GM13976 (cell line): ENCODE measurements at regions of chr1 and their contacts with region 1.

Region 1: DNA sequence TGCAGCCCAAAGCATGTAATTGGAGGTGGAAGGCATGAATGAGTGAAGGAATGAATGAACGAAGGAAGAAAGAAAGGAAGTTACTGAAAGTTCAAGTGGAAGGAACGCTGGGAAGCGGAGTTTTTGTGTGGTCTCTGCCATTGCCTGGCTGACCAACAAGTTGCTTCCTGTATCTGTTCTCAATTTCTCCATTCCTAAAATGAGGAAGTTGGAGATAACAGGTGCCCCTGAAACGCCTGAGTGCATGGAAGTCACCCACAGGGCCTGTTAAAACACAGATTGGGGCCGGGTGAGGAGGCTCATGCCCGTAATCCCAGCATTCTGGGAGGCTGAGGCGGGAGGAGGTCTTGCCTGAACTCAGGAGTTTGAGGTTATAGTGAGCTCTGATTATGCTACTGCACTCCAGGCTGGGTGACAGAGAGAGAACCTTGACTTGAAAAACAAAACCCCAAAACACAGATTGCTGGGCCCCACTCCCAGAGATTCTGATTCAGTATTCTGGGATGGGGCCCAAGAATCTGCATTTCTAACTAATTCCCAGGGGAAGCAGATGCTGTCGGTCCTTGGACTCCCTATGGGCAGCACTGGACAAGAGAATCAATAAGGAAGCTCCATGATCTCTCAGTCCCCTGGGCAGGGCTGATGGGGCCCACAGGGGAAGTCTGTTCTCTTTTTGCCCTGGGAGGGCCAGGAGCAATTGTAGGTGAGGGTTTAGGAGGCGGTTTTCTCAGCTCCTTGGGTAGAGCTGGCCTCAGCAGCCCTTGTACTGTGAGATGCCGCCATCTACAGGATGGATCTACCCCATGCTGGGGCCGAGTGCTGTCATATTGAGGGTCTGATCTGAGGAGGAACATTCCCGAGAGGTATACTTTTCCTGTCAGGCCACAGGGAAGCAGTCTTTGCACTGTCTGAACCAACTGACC is 3.3 kb upstream of the CNR2 start:
- DNase-seq: peak; percentile 85
- CTCF ChIP-seq: peak; percentile 74

Region 2: DNA sequence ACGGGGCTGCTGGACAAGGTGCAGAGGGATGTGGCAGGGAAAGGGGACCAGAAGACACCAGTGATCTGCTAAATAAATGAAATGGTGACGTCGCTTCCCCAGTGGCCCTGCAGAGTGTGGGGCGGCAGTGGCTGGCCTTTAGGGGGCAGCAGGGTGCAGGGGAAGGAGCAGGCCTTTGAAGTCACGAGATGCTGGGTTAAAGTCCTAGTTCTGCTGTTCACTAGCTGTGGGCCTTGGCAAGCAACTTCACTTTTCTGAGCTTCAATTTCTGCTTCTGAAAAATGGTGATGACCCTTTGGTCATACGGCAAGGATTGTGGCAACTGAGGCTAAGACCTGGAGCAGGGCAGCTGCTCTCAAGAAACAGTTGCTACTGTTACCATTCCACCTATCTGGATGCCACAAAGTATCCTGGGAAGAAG is 106.7 kb before region 1 on chr1:
- in situ Hi-C with region 1: loop called (anchors 5 kb)
- DNase-seq: peak; percentile 87
- CTCF ChIP-seq: peak; percentile 94

Region 3: DNA sequence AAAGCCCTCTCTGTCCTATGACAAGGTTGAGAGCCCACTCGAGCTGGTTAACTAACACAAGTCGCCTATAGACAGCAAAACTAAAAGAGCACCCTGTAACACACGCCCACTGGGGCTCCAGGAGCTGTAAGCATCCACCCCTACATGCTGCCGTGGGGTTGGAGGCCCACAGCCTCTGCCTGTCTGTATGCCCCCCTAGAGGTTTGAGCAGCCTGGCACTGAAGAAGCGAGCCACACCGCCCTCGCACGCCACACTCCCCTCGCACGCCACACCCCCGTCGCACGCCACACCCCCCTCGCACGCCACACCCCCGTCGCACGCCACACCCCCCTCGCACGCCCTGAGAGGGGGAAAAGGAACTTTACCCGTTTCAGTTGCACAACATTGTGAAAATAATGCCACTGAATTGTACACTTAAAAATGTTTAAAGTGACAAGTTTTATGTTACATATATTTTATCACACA is 78.0 kb before region 1 on chr1:
- in situ Hi-C with region 1: no loop called
- DNase-seq: peak; percentile 81
- CTCF ChIP-seq: no peak

Region 4: DNA sequence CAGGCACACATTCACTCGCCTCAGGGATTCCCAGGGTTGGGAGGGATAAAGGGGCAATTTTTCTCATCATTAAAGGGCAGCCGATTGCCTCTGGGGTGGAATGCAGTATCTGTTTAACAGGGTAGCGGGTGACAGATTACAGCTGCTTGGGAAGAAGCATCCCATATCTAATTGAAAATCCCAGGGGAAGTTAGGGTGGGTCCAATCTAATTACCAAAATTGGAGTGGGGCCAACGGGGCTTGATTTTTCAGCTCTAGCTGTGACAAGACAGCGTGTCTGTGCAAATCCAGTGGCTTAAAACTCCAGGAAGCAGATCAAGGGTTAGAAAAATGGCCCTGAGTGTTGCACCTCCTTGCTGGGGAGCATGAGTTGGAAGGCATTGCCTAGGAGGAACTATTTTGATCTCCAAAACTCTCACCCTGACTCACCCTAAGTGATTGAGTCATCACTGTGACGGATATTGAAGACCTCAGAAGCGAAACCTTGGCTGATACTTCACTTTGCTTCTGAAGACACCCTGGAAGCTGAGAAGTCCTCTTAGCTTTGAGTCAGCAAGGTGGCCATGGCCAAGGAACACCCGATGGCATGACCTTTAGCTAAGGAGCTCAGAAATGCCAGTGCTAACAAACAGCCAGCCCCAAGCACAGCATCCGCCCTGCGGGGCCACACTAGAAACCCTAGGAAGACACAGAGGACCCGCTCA is 448.7 kb after region 1 on chr1:
- in situ Hi-C with region 1: no loop called
- DNase-seq: peak; percentile 82
- CTCF ChIP-seq: no peak